ENCODE measurements at regions of chrX and their contacts with region 1.

Region 1: GRCh38 chrX:48021026-48021900 is 14.5 kb downstream of the SPACA5 start:
- DNase-seq: peak; percentile 81
- ATAC-seq: peak; percentile 90

Region 2: GRCh38 chrX:47193475-47194193 is 827.6 kb before region 1 on chrX and contains the start of gene UBA1:
- intact Hi-C with region 1: loop called (anchors 5 kb)
- DNase-seq: peak; percentile 95
- ATAC-seq: peak; percentile 90
- total RNA-seq, gene UBA1: 93.5 TPM

Region 3: DNA sequence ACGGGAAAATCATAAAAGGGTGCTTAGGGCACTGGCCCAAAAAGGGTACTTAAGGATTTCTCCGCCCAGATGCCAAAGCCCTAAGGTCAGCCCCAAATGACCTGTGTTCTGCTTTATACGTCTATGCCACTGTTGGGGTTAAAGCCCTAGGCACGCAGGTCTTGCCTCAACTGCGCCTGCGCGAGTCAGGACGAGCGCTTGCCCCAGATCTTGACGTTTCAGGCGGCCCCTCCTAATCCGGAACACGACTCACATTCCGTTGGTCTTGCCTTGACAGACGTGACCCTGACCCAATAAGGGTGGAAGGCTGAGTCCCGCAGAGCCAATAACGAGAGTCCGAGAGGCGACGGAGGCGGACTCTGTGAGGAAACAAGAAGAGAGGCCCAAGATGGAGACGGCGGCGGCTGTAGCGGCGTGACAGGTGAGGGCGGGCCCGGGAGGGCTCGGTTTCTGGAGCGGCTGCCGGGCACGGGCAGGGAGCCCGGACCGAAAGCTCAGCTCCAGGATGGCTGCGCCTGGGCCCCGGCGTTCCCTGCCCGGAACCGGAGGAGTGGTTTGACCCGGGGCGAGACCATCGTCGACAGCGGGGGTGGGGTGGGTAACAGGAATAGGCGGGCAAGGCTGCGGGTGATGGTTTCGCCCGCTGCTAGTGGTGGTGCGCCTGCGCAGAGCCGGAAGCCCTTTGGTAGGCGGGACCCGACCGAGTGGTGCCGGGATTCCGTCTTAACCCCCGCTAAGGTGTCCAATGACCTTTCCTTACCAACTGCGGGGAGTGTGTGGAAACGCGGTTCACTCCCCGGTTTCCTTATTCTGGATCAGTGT is 460.2 kb before region 1 on chrX and contains the start of gene ARAF:
- intact Hi-C with region 1: loop called (anchors 2 kb)
- DNase-seq: peak; percentile 96
- ATAC-seq: peak; percentile 96
- total RNA-seq, gene ARAF: 76.5 TPM

Region 4: DNA sequence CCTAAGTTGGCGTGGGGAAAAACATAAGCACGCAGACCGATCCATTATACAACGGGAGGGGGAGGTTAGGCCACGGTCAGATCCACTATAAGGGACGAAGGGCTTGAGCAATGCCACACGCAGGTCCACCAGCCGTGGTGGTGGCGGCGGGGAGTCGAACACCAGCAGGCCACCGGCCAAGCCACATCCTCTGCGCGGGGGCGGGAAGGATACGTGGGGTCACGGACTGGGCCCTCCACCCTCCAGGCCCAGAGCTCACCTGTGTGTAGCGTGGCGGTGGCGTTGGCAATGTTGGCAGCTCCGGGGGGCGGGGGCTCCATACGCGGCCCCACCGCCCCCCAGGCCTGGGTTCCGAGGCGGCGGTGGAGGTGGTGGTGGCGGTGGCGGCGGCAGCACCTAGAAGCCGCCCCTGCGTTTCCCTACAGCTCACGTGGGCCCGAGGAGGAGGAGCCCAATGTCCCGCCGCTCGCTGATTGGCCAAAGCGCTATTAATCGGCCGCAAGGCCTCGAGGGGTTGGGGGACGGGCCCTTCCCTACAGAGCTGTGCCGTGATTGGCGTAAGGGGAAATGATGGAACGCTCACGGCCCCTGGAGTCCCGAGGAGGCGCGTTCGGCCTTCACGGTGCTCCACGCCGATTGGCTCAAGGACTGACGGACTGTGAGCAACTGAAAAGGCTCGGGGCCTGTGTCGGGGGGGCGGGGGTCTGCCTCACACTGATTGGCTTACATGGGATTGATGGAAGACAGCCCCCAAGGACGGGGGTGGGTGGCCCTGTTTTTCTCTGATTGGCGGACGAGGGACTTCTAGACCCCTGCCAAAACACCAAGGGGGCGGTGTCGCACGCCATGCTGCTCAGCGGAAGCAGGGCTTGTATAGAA is 370.9 kb before region 1 on chrX and contains the start of gene ELK1:
- intact Hi-C with region 1: loop called (anchors 10 kb)
- DNase-seq: peak; percentile 95
- ATAC-seq: peak; percentile 98
- total RNA-seq, gene ELK1: 19.3 TPM

Region 5: GRCh38 chrX:47815901-47816845 is 205.1 kb before region 1 on chrX:
- intact Hi-C with region 1: no loop called
- DNase-seq: no peak
- ATAC-seq: no peak

Region 6: DNA sequence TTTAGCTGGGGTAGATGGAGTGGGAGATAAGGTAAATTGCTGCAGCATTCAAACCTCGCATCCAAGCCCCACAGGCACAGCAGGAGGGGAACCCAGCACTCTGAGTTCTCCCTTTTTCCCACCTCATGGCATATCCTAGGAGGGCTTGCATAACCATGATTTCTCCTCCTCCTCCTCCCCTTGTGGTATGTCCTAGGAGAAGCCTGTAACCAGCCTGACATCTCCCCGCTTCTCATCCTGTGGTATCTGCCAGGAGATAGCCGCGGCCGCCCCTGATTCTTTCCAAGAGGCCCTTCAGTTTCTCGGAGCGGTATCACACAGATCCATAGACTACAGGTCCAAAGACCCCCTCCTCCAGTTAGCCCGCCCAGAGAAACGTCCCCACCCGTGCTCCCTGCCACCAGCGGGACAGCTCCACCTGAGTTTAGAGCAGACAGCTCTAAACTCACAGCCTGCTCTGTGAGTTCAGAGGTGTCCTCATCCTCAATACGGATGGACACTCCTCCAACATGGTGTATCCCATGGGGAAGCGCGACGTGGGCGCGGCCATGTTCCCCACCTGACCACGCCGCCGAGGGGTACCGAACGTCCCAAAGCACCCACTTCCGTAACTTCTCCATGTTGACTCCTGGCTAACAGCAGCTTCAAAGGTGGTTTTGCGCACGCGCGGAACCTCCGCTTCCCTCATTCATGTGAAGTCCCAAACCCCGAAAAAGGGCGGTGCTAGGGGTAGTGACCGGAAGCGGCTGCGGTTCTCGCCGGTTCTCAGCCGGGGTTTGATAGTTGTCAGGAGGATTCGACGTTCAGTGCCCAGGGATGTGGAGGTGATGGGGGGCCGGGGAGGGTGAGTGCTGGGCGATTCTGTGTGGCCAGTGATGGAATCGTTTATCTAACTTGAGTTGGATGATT is 184.8 kb before region 1 on chrX and contains the start of gene ZNF81:
- intact Hi-C with region 1: loop called (anchors 5 kb)
- DNase-seq: peak; percentile 96
- ATAC-seq: peak; percentile 100
- total RNA-seq, gene ZNF81: 5.0 TPM

Region 7: DNA sequence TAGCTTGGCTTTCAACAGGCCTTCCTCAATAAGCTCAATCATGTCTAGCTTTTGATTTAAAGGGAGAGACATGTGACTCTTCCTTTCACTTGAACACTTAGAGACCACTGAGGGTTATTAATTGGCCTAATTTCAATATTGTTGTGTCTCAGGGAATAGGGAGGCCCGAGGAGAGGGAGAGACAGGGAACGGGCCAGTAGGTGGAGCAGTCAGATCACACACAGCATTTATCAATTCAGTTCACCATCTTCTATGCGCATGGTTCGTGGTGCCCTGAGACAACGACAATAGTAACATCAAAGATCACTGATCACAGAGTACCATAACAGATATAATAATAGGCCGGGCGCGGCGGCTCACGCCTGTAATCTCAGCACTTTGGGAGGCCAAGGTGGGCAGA is 166.8 kb before region 1 on chrX:
- intact Hi-C with region 1: loop called (anchors 2 kb)
- DNase-seq: no peak
- ATAC-seq: peak; percentile 48

Region 8: DNA sequence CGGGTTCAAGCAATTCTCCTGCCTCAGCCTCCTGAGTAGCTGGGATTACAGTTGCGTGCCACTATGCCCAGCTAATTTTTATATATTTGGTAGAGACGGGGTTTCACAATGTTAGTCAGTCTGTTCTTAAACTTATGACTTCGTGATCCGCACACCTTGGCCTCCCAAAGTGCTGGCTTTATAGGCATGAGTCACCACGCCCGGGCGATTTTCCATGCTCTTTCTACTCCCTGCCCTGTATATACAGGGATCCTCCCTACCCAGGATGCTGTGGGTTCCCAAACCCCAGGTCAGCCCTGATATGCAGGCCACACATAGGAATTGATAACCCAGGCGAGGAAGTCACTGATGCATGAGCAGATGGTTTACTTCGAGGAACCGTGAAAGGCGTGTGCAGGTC is 144.0 kb after region 1 on chrX:
- intact Hi-C with region 1: no loop called
- DNase-seq: no peak
- ATAC-seq: no peak

Measured in Right ventricle myocardium inferior (tissue), 1 donor.